WTC11 (cell line): ENCODE measurements at regions of chr11 and their contacts with region 1.

Region 1: DNA sequence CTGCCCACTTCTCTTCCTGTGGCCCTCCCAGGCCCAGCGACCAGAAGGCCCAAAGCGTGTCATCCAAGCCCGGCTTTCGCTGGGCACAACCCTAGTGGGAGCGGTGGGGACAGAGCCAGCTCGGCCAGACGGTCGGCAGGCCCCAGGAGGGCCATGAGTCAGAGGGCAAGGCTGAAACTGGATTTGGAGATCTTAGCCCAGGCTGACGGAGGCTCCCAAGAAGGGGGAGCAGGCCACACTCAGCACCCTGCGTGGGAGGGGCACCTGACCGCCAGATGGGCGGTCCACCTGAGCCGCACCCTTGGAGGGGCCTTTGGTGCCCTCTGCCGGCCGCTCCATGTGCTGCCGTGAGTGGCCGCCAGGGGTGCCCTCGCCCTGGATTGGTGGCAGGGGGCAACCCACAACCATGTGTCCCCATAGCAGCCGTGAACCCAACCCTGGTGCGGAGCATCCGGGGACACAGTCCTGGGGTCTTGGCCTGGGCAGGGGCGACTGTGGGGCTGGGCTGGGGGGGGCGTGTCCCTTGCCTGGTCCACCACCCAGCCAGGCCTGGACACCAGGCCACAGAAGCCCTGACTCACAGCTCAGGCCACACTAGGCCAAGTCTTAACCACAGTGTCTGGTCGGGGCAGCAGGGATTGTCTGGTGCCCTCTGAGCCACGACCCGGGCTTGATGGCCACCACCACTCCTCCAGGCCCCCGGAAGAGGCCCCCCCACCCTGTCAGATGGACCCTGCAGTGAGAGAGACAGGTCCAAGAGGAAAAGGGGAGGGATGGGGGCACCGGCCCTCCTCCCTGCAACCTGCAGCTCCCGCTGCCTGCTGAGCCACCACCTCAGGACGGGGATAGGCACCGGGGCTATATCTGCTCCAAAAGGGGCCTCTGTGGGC is 19.2 kb upstream of the TALDO1 start:
- DNase-seq: peak; percentile 92
- ATAC-seq: peak; percentile 81
- H3K4me3 Mint-ChIP-seq: no peak overlapping the region
- H3K27ac Mint-ChIP-seq: no peak overlapping the region
- H3K4me1 Mint-ChIP-seq: peaks cover 11% of the 10 kb centered on the region
- H3K27me3 Mint-ChIP-seq: peaks cover 8% of the 10 kb centered on the region
- CTCF ChIP-seq: peak; percentile 96

Region 2: GRCh38 chr11:554824-555472 is 173.2 kb before region 1 on chr11:
- CTCF ChIA-PET with region 1: interaction called, 22 read pairs
- POLR2A ChIA-PET with region 1: no interaction called
- DNase-seq: peak; percentile 85
- ATAC-seq: peak; percentile 52
- H3K4me3 Mint-ChIP-seq: peak overlapping the region; percentile 57
- H3K27ac Mint-ChIP-seq: no peak overlapping the region
- H3K4me1 Mint-ChIP-seq: peaks cover 11% of the 10 kb centered on the region
- H3K27me3 Mint-ChIP-seq: peaks cover 26% of the 10 kb centered on the region
- CTCF ChIP-seq: peak; percentile 63

Region 3: DNA sequence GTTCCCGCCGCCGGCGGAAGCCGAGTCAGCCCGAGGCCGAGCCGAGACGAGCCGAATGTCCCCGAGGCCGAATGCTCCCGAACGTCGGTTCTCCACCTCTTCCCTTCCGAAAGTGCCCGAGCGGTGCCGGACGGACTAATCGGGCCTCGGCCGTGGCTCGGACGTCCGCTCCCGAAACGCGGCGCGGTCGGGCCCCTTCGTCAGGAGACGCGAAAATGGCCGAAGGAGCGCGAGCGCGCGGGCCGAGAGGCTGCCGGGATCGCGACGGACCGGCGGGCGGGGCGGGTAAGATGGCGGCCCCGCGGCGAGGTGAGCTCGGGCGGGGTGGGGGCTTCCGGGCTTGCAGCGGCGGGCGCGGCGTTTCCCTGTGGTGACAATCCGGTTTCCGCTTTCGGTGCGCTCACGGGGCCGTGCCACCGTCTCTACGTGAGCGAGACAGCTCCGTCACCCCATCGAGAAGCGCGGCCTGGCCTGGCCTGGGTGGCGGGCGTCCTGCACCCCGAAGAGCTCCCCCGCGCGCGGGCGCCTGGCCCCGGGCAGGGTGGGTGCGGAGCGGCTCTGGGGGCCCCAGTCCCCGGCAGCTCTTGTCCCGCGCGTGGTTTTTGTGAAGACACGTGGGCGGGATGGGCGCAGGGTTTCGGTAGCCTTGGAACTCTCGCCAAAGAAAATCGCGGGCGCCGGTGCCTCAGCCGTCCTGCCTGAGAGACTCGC is 32.4 kb before region 1 on chr11 and contains the start of gene TMEM80:
- CTCF ChIA-PET with region 1: interaction called, 15 read pairs
- POLR2A ChIA-PET with region 1: interaction called, 5 read pairs
- DNase-seq: peak; percentile 100
- ATAC-seq: peak; percentile 83
- H3K4me3 Mint-ChIP-seq: peak within 1 kb of the TSS; percentile 78
- H3K27ac Mint-ChIP-seq: peak within 1 kb of the TSS; percentile 91
- H3K4me1 Mint-ChIP-seq: peaks cover 34% of the 10 kb centered on the region
- H3K27me3 Mint-ChIP-seq: no peaks in the 10 kb centered on the region
- CTCF ChIP-seq: no peak
- total RNA-seq, gene TMEM80: 23.4 to 28.4 TPM (median 24.5 TPM) in 3 replicates

Region 4: DNA sequence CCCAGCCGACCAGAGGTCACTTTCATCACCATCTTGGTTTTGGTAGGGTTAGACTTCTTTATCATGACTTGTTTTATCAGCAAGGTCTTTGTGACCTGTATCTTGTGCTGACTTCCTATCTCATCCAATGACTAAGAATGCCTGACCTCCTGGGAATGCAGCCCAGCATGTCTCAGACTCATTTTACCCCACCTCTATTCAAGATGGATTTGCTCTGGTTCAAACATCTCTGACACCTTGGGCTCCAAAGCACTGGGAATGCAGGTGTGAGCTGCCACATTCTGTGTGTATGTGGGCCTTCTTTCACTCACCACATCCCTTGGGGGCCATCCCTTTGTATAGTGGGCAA is 14.1 kb after region 1 on chr11:
- CTCF ChIA-PET with region 1: interaction called, 37 read pairs
- POLR2A ChIA-PET with region 1: interaction called, 8 read pairs
- DNase-seq: no peak
- ATAC-seq: no peak
- H3K4me3 Mint-ChIP-seq: no peak overlapping the region
- H3K27ac Mint-ChIP-seq: no peak overlapping the region
- H3K4me1 Mint-ChIP-seq: peaks cover 31% of the 10 kb centered on the region
- H3K27me3 Mint-ChIP-seq: 0 out of 2 replicates have a peak, but pooled peaks cover 3% of the 10 kb centered on the region
- CTCF ChIP-seq: no peak

Region 5: DNA sequence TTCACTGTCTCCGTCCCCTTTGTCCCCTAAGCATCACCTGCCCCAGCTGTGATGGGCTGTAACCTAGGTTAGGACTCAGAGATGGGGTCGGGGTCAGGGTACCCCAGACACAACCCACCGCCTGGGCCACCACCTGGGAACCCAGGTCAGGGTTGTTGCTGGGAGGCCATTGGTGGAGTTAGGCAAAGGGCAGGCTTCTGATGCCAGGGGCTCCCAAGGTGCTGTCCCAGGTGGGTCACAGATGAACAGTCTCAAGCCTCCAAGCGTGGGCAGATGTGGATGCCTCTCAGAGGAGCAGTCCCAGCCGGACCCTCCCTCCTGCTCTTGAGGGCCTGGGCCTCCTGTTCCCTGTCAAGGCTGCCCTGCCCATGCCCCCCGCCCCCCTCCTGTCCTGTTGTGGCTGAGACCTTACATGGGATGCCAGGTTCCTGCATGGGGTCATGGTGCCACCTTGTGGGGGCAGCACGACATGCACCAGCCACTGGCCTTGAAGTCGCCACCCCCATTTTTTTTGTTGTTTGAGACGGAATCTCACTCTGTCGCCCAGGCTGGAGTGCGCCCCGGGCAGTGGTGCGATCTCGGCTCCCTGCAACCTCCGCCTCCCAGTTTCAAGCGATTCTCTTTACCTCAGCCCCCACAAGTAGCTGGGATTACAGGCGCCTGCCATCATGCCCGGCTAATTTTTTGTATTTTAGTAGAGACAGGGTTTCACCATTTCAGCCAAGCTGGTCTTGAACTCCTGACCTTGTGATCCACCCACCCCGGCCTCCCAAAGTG is 37.1 kb after region 1 on chr11:
- CTCF ChIA-PET with region 1: interaction called, 94 read pairs
- POLR2A ChIA-PET with region 1: interaction called, 3 read pairs
- DNase-seq: peak; percentile 82
- ATAC-seq: peak; percentile 57
- H3K4me3 Mint-ChIP-seq: no peak overlapping the region
- H3K27ac Mint-ChIP-seq: no peak overlapping the region; the same call in 1 of the 2 replicates
- H3K4me1 Mint-ChIP-seq: peaks cover 12% of the 10 kb centered on the region
- H3K27me3 Mint-ChIP-seq: no peaks in the 10 kb centered on the region
- CTCF ChIP-seq: peak; percentile 50